Esophagus squamous epithelium (tissue), 5 donors: ENCODE measurements at regions of chr9 and their contacts with region 1.

Region 1: DNA sequence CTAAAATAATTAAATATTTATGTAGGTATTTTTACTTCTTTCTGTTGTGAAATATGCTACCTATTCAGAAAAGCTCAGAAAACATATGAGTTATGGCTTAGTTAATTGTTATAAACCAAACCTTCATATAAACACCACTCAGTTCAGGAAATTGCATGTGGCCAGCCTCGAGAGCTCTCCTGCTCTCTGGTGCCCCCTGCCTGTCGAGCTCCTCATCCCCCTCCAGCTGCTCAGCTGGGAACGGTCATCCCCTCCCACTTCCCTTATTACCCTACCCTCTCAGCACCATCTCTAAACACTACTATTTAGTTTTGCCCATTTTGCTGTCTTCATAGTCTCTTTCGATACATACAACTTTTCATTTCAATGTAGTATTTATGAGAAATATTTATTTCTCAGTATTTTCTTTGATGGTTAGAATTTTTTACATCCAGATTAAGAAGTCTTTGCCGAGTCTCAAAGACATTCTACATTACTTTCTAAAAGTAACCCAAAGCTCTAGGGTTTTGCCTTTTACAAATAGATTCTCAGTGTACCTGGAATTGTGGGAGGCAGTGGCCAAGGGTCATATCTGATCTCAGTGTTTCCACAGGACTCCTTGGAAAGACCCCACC is 51.2 kb upstream of the SEMA4D start:
- DNase-seq: no peak
- H3K4me3 ChIP-seq: no peak overlapping the region
- H3K27ac ChIP-seq: peak overlapping the region in 3 of 4 donors; percentile 52 to 72 (median 69)
- H3K4me1 ChIP-seq: peaks cover 8 to 26% (median 9%) of the 10 kb centered on the region in 3 donors
- H3K27me3 ChIP-seq: no peaks in the 10 kb centered on the region
- CTCF ChIP-seq: peak; percentile 91 to 96 (median 92)
- POLR2A ChIP-seq: no peak

Region 2: DNA sequence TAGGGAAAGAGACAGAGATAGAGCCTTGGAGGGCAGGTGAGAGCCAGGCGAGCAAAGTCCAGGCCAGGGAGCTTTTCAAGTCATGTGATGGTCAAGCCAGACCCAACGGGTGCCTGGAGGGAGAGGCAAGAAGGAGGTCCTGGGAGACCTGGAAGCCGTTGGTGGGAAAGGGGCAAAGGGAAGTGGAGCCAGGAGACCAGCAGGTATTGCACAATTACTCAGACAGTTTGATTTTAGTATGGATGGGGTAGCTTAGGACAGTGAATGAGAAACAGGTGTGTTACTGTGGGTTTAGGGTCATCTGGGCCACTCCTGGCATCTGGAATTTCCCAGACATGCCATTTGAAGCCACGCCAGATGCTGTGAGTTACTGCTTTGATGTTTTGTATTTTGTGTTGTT is 225.7 kb before region 1 on chr9:
- intact Hi-C with region 1: loop called (anchors 10 kb)
- DNase-seq: no peak
- H3K4me3 ChIP-seq: no peak overlapping the region
- H3K27ac ChIP-seq: no peak overlapping the region
- H3K4me1 ChIP-seq: peaks cover 7 to 49% (median 12%) of the 10 kb centered on the region in 3 donors
- H3K27me3 ChIP-seq: no peaks in the 10 kb centered on the region
- CTCF ChIP-seq: no peak
- POLR2A ChIP-seq: no peak